Panc1 (cell line): ENCODE measurements at regions of chr12 and their contacts with region 1.

Region 1: GRCh38 chr12:84294246-84294645 is 618.4 kb downstream of the SLC6A15 start:
- DNase-seq: no peak
- ATAC-seq: no peak
- H3K4me3 ChIP-seq: no peak overlapping the region
- H3K27ac ChIP-seq: no peak overlapping the region
- H3K4me1 ChIP-seq: no peaks in the 10 kb centered on the region
- H3K27me3 ChIP-seq: no peaks in the 10 kb centered on the region
- CTCF ChIP-seq: no peak

Region 2: DNA sequence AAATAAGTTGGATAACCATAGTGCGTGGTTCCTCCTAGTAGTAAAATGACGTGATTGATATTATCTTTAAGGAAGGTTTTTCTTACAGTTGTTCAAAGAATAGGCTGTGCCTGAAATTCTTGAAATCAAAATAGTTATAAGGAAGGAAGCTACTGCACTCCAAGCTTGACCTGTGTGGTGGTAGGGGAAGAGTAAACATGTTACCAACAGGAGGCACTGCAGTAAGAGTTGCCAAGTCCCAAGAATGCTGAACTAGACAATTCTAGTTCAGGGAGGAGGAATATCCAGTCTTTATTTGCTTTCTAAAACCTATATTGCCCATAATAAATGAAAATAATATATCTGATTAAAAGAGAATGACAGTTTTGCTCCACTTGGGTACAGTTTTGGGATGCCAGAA is 843.1 kb before region 1 on chr12:
- CTCF ChIA-PET with region 1: no interaction called
- POLR2A ChIA-PET with region 1: no interaction called
- in situ Hi-C with region 1: no loop called
- intact Hi-C with region 1: no loop called
- DNase-seq: no peak
- ATAC-seq: no peak
- H3K4me3 ChIP-seq: no peak overlapping the region
- H3K27ac ChIP-seq: no peak overlapping the region
- H3K4me1 ChIP-seq: no peaks in the 10 kb centered on the region
- H3K27me3 ChIP-seq: no peaks in the 10 kb centered on the region
- CTCF ChIP-seq: no peak

Region 3: GRCh38 chr12:83793616-83794015 is 500.6 kb before region 1 on chr12:
- CTCF ChIA-PET with region 1: no interaction called
- POLR2A ChIA-PET with region 1: interaction called, 12 read pairs
- in situ Hi-C with region 1: no loop called
- intact Hi-C with region 1: no loop called
- DNase-seq: no peak
- ATAC-seq: no peak
- H3K4me3 ChIP-seq: no peak overlapping the region
- H3K27ac ChIP-seq: no peak overlapping the region
- H3K4me1 ChIP-seq: no peaks in the 10 kb centered on the region
- H3K27me3 ChIP-seq: no peaks in the 10 kb centered on the region
- CTCF ChIP-seq: no peak